ENCODE measurements at regions of chr12 and their contacts with region 1.

Region 1: GRCh38 chr12:121351820-121352681 is at the start of gene ANAPC5:
- DNase-seq: peak; percentile 93 to 96
- H3K4me3 ChIP-seq: peak within 1 kb of the TSS; percentile 100
- H3K27ac ChIP-seq: peak within 1 kb of the TSS; percentile 48
- H3K4me1 ChIP-seq: peaks cover 14% of the 10 kb centered on the region
- H3K27me3 ChIP-seq: no peaks in the 10 kb centered on the region
- CTCF ChIP-seq: no peak
- total RNA-seq, gene ANAPC5: 93.6 and 101 TPM in 2 replicates

Region 2: GRCh38 chr12:120453977-120454376 is 898.1 kb before region 1 on chr12:
- CTCF ChIA-PET with region 1: no interaction called
- POLR2A ChIA-PET with region 1: interaction called, 11 read pairs
- intact Hi-C with region 1: no loop called
- DNase-seq: no peak
- H3K4me3 ChIP-seq: no peak overlapping the region
- H3K27ac ChIP-seq: no peak overlapping the region
- H3K4me1 ChIP-seq: no peaks in the 10 kb centered on the region
- H3K27me3 ChIP-seq: no peaks in the 10 kb centered on the region
- CTCF ChIP-seq: peak; percentile 61

Region 3: GRCh38 chr12:121296618-121297434 is 55.2 kb before region 1 on chr12 and contains the start of gene CAMKK2:
- CTCF ChIA-PET with region 1: no interaction called
- POLR2A ChIA-PET with region 1: no interaction called
- intact Hi-C with region 1: loop called (anchors 5 kb)
- DNase-seq: peak; percentile 44 to 90
- H3K4me3 ChIP-seq: peak within 1 kb of the TSS; percentile 95
- H3K27ac ChIP-seq: peak within 1 kb of the TSS; percentile 12; the same call in 1 of the 2 replicates
- H3K4me1 ChIP-seq: peaks cover 6% of the 10 kb centered on the region
- H3K27me3 ChIP-seq: no peaks in the 10 kb centered on the region
- CTCF ChIP-seq: no peak; the same call in 1 of the 2 replicates
- total RNA-seq, gene CAMKK2: 26.7 and 37.6 TPM in 2 replicates

Region 4: GRCh38 chr12:121399391-121400331 is 47.6 kb after region 1 on chr12 and contains the start of gene RNF34:
- CTCF ChIA-PET with region 1: interaction called, 3 read pairs
- POLR2A ChIA-PET with region 1: interaction called, 8 read pairs
- intact Hi-C with region 1: loop called (anchors 1 kb)
- DNase-seq: peak; percentile 93 to 98
- H3K4me3 ChIP-seq: peak within 1 kb of the TSS; percentile 84
- H3K27ac ChIP-seq: peak within 1 kb of the TSS; percentile 49
- H3K4me1 ChIP-seq: peaks cover 24% of the 10 kb centered on the region
- H3K27me3 ChIP-seq: no peaks in the 10 kb centered on the region
- CTCF ChIP-seq: no peak
- total RNA-seq, gene RNF34: 37.2 and 43.7 TPM in 2 replicates

Region 5: DNA sequence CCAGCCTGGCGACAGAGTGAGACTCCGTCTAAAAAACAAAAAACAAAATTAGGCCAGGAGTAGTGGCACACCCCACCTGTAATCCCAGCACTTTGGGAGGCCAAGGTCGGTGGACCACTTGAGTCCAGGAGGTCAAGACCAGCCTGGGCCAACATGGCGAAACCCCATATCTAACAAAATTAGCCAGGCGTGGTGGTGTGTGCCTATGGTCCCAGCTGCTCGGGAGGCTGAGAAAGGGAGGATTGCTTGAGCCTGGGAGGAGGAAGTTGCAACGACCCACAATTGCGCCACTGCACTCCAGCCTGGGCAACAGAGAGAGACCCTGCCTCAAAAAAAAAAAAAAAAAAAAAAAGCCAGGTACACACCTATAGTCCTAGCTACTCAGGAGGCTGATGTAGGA is 191.7 kb after region 1 on chr12:
- CTCF ChIA-PET with region 1: interaction called, 10 read pairs
- POLR2A ChIA-PET with region 1: no interaction called
- intact Hi-C with region 1: no loop called
- DNase-seq: no peak
- H3K4me3 ChIP-seq: no peak overlapping the region
- H3K27ac ChIP-seq: no peak overlapping the region
- H3K4me1 ChIP-seq: peaks cover 3% of the 10 kb centered on the region
- H3K27me3 ChIP-seq: no peaks in the 10 kb centered on the region
- CTCF ChIP-seq: no peak

Region 6: GRCh38 chr12:121688966-121689365 is 336.9 kb after region 1 on chr12:
- CTCF ChIA-PET with region 1: no interaction called
- POLR2A ChIA-PET with region 1: no interaction called
- intact Hi-C with region 1: loop called (anchors 2 kb)
- DNase-seq: no peak
- H3K4me3 ChIP-seq: no peak overlapping the region
- H3K27ac ChIP-seq: no peak overlapping the region
- H3K4me1 ChIP-seq: peaks cover 4% of the 10 kb centered on the region; the same call in 1 of the 2 replicates
- H3K27me3 ChIP-seq: no peaks in the 10 kb centered on the region
- CTCF ChIP-seq: no peak

Measured in PC-9 (cell line).